ENCODE measurements at regions of chr12 and their contacts with region 1.

Region 1: DNA sequence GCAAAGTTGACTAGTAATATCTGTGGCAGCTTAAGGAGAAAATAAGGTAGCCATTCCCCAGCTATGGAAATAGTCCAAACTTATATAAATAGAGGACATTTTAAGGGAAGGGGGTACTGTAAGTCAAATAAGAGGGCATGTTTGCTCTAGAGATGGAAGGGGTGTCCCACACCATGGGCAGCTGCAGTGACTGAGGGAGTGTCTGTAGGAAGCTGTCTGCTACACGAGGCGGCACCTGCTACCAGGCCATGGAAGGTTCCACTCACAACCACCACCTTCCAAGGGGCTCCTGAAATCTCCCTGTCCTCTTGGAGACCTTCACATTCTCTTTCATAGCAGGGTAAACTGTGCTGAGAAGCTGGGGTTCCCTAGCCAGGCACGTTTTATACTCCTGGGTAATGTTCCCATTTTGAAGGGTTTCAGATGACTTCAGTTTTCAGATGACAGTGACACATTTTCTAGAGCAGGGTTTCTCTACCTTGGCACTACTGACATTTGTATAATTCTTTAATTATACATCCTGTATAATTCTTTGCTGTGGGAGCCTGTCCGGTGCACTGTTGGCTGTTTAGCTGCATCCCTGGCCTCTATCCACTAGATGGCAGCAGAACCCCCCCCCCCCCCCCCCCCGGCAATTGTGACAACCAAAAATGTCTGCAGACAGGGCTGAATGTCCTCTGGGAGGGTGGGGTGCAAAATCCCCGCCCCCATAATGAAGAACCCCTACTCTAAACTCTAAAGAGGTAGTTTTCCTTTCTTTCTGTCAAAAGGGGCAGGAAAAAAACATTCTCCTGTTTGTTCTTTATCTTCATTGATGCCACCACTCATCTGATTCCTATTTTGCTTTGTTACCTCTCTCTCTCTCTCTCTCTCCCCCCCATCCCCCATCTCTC is 11.6 kb upstream of the SMCO2 start:
- DNase-seq: peak in 1 of 2 donors; percentile 52
- ATAC-seq: peak; percentile 62 to 71 (median 67)
- H3K4me3 ChIP-seq: no peak overlapping the region
- H3K4me3 Mint-ChIP-seq: no peak overlapping the region
- H3K27ac ChIP-seq: no peak overlapping the region
- H3K27ac Mint-ChIP-seq: no peak overlapping the region
- H3K4me1 ChIP-seq: no peaks in the 10 kb centered on the region
- H3K4me1 Mint-ChIP-seq: peaks cover 7 to 8% of the 10 kb centered on the region in 2 donors
- H3K27me3 ChIP-seq: no peaks in the 10 kb centered on the region
- H3K27me3 Mint-ChIP-seq: peaks cover 9 to 22% of the 10 kb centered on the region in 2 donors
- CTCF ChIP-seq: peak; percentile 50

Region 2: GRCh38 chr12:26378711-26379110 is 1056.2 kb before region 1 on chr12:
- intact Hi-C with region 1: no loop called
- DNase-seq: no peak
- ATAC-seq: no peak
- H3K4me3 ChIP-seq: no peak overlapping the region
- H3K4me3 Mint-ChIP-seq: no peak overlapping the region
- H3K27ac ChIP-seq: no peak overlapping the region
- H3K27ac Mint-ChIP-seq: no peak overlapping the region
- H3K4me1 ChIP-seq: no peaks in the 10 kb centered on the region
- H3K4me1 Mint-ChIP-seq: no peaks in the 10 kb centered on the region
- H3K27me3 ChIP-seq: no peaks in the 10 kb centered on the region
- H3K27me3 Mint-ChIP-seq: no peaks in the 10 kb centered on the region
- CTCF ChIP-seq: no peak

Region 3: GRCh38 chr12:27009881-27010301 is 425.0 kb before region 1 on chr12:
- intact Hi-C with region 1: no loop called
- DNase-seq: no peak
- ATAC-seq: no peak
- H3K4me3 ChIP-seq: no peak overlapping the region
- H3K4me3 Mint-ChIP-seq: no peak overlapping the region
- H3K27ac ChIP-seq: no peak overlapping the region
- H3K27ac Mint-ChIP-seq: peak overlapping the region in 1 of 2 donors; percentile 19
- H3K4me1 ChIP-seq: peaks cover 15% of the 10 kb centered on the region
- H3K4me1 Mint-ChIP-seq: peaks cover 48 to 55% of the 10 kb centered on the region in 2 donors
- H3K27me3 ChIP-seq: no peaks in the 10 kb centered on the region
- H3K27me3 Mint-ChIP-seq: no peaks in the 10 kb centered on the region
- CTCF ChIP-seq: no peak

Region 4: GRCh38 chr12:27462151-27462694 is 27.3 kb after region 1 on chr12:
- intact Hi-C with region 1: no loop called
- DNase-seq: no peak
- ATAC-seq: no peak
- H3K4me3 ChIP-seq: no peak overlapping the region
- H3K4me3 Mint-ChIP-seq: no peak overlapping the region
- H3K27ac ChIP-seq: no peak overlapping the region
- H3K27ac Mint-ChIP-seq: no peak overlapping the region
- H3K4me1 ChIP-seq: no peaks in the 10 kb centered on the region
- H3K4me1 Mint-ChIP-seq: peaks cover 0 to 1% of the 10 kb centered on the region in 2 donors
- H3K27me3 ChIP-seq: peaks cover 2% of the 10 kb centered on the region
- H3K27me3 Mint-ChIP-seq: peaks cover 13 to 35% of the 10 kb centered on the region in 2 donors
- CTCF ChIP-seq: no peak

Region 5: DNA sequence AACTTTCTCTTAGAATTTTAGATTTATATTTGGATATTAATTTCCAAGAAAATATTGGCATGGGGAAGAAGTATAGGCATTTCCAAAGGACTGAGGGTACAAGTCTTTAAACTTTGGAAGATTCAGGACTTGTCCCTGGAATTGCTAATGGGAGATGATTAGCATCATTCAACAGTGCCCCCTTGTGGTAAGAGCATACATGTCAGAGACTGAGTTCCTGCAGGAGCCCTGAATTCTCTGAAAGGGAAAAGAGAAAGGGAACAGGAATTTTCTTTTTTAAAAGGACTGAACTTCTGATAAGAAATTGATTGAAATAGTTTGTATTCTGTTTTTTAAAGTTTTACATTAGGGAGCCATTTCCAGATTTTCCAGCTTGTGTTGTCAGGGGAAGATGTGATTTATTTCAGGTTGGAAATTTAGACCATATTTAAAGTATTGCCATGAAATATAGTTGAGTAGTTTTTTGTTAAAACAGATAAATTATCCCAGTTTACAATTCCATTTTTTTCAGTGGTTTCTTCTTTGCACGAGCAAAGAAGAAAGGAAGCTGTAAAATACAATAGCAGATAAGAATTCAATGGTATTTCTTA is 217.3 kb after region 1 on chr12:
- intact Hi-C with region 1: loop called (anchors 2 kb)
- DNase-seq: peak in 1 of 2 donors; percentile 73
- ATAC-seq: peak in 1 of 3 donors; percentile 48
- H3K4me3 ChIP-seq: no peak overlapping the region
- H3K4me3 Mint-ChIP-seq: no peak overlapping the region
- H3K27ac ChIP-seq: no peak overlapping the region
- H3K27ac Mint-ChIP-seq: no peak overlapping the region
- H3K4me1 ChIP-seq: no peaks in the 10 kb centered on the region
- H3K4me1 Mint-ChIP-seq: peaks cover 0 to 5% of the 10 kb centered on the region in 2 donors
- H3K27me3 ChIP-seq: no peaks in the 10 kb centered on the region
- H3K27me3 Mint-ChIP-seq: peaks cover 0 to 7% of the 10 kb centered on the region in 2 donors
- CTCF ChIP-seq: peak; percentile 82

Region 6: GRCh38 chr12:27703710-27704452 is 269.0 kb after region 1 on chr12:
- intact Hi-C with region 1: loop called (anchors 1 kb)
- DNase-seq: peak; percentile 26 to 82
- ATAC-seq: peak; percentile 78 to 89 (median 87)
- H3K4me3 ChIP-seq: no peak overlapping the region
- H3K4me3 Mint-ChIP-seq: no peak overlapping the region
- H3K27ac ChIP-seq: no peak overlapping the region
- H3K27ac Mint-ChIP-seq: no peak overlapping the region
- H3K4me1 ChIP-seq: no peaks in the 10 kb centered on the region
- H3K4me1 Mint-ChIP-seq: no peaks in the 10 kb centered on the region
- H3K27me3 ChIP-seq: no peaks in the 10 kb centered on the region
- H3K27me3 Mint-ChIP-seq: peaks cover 13% of the 10 kb centered on the region in 2 donors
- CTCF ChIP-seq: peak; percentile 65